Heart right ventricle (tissue), 16 donors: ENCODE measurements at regions of chr2 and their contacts with region 1.

Region 1: DNA sequence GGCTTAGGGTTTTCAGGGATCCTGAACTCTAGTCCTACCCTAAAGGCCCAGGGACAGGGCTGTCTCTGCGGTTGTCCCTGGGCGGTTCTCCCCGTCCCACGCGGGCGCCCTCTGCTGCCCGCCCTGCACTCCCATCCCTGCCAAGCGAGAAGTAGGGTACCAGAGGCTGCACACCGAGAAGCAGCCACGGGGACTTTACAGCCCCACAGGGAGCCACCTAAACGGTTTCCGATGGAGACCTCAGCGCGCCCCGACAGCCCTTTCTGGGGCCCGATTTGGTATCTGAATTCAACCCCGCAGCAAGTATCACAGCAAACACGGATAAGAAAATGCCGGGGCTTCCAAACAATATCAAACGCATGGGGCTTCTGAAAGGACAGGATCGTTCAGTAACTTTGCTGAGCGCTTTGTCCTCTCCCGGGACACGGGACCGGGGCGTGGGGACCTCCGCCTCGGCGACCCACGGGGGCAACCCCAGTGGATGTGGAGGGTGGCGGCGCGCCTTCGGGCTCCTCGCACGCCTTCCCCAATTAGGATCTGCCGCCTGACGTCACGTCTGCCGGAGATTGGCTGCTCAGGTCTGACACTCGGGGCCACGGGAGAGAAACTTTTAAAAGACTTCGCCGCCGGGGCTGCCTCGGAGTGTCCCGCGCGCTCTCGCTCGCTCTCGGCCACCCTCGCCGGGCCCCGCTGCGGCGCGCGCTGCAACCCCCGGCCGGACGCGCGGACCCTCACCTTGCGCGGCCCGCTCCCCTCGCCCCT is at the start of gene LTBP1:
- DNase-seq: peak; percentile 80 to 84
- ATAC-seq: peak; percentile 87 to 95 (median 91)
- H3K4me3 ChIP-seq: peak within 1 kb of the TSS; percentile 51 to 96 (median 73)
- H3K27ac ChIP-seq: peak within 1 kb of the TSS; percentile 79 to 94 (median 91)
- H3K4me1 ChIP-seq: peaks cover 0 to 33% (median 17%) of the 10 kb centered on the region in 9 donors
- H3K27me3 ChIP-seq: peaks cover 0 to 54% (median 0%) of the 10 kb centered on the region in 7 donors
- CTCF ChIP-seq: peak; percentile 62 to 89 (median 83)
- total RNA-seq, gene LTBP1: 72.4 to 164 (median 90.3) TPM

Region 2: GRCh38 chr2:32783469-32783868 is 163.0 kb before region 1 on chr2:
- intact Hi-C with region 1: loop called in 3 of 10 experiments (anchors 5 to 10 kb)
- DNase-seq: peak in 1 of 2 donors; percentile 30
- ATAC-seq: peak; percentile 63 to 89 (median 86)
- H3K4me3 ChIP-seq: peak overlapping the region in 1 of 10 donors; percentile 6
- H3K27ac ChIP-seq: peak overlapping the region in 9 of 10 donors; percentile 40 to 73 (median 58)
- H3K4me1 ChIP-seq: peaks cover 0 to 33% (median 26%) of the 10 kb centered on the region in 9 donors
- H3K27me3 ChIP-seq: no peaks in the 10 kb centered on the region
- CTCF ChIP-seq: no peak

Region 3: GRCh38 chr2:32825291-32825712 is 121.2 kb before region 1 on chr2:
- intact Hi-C with region 1: loop called in 1 of 10 experiments (anchors 5 kb)
- DNase-seq: peak in 1 of 2 donors; percentile 69
- ATAC-seq: peak; percentile 50 to 81 (median 69)
- H3K4me3 ChIP-seq: peak overlapping the region in 1 of 10 donors; percentile 18
- H3K27ac ChIP-seq: peak overlapping the region; percentile 17 to 84 (median 73)
- H3K4me1 ChIP-seq: peaks cover 0 to 33% (median 19%) of the 10 kb centered on the region in 9 donors
- H3K27me3 ChIP-seq: no peaks in the 10 kb centered on the region
- CTCF ChIP-seq: no peak

Region 4: GRCh38 chr2:33008716-33009115 is 62.2 kb after region 1 on chr2:
- intact Hi-C with region 1: loop called in 3 of 10 experiments (anchors 5 to 10 kb)
- DNase-seq: no peak
- ATAC-seq: peak in 6 of 8 donors; percentile 44 to 86 (median 61)
- H3K4me3 ChIP-seq: no peak overlapping the region
- H3K27ac ChIP-seq: peak overlapping the region in 1 of 10 donors; percentile 10
- H3K4me1 ChIP-seq: peaks cover 0 to 28% (median 9%) of the 10 kb centered on the region in 9 donors
- H3K27me3 ChIP-seq: no peaks in the 10 kb centered on the region
- CTCF ChIP-seq: no peak

Region 5: GRCh38 chr2:33015421-33016142 is 69.1 kb after region 1 on chr2:
- intact Hi-C with region 1: loop called in 5 of 10 experiments (anchors 5 to 10 kb)
- DNase-seq: no peak
- ATAC-seq: peak; percentile 50 to 93 (median 84)
- H3K4me3 ChIP-seq: no peak overlapping the region
- H3K27ac ChIP-seq: peak overlapping the region in 9 of 10 donors; percentile 29 to 86 (median 63)
- H3K4me1 ChIP-seq: peaks cover 0 to 42% (median 18%) of the 10 kb centered on the region in 9 donors
- H3K27me3 ChIP-seq: no peaks in the 10 kb centered on the region
- CTCF ChIP-seq: no peak

Region 6: DNA sequence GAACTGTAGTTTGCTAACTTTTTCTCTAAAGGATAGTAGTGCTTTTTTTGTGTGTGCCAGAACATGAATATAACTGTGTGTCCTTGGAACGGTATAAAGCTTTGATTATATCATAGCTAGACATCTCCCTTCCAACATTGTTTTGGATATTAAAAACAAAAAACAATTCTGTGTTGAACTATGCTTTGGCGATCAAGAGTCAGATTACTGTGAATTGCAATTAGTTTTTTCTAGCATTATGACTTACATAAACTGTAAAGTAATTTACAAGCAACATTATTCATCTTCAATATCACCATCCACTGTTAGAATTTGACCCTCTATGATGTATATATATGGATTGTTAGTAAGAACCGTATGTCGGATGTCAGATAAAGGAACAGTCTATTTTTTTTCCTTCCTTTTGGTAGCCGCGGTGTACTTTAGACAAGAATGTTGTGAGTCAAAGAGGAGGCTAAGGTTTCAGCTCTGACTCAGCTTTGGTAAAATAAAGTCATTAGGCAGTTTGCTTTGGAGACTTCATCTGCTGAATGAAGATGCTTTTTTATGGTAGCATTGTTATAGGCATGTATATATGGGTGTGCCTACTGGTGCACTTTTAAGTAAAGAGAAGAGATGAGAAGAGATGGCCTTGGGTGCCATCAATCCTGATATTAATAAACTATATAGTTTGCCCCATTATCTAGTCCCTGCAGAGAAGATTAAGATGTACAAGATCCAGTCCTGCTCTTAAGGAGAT is 76.7 kb after region 1 on chr2:
- intact Hi-C with region 1: loop called in 5 of 10 experiments (anchors 5 to 10 kb)
- DNase-seq: no peak
- ATAC-seq: peak in 5 of 8 donors; percentile 15 to 65 (median 32)
- H3K4me3 ChIP-seq: no peak overlapping the region
- H3K27ac ChIP-seq: peak overlapping the region in 8 of 10 donors; percentile 16 to 73 (median 60)
- H3K4me1 ChIP-seq: peaks cover 0 to 42% (median 26%) of the 10 kb centered on the region in 9 donors
- H3K27me3 ChIP-seq: no peaks in the 10 kb centered on the region
- CTCF ChIP-seq: no peak